A673 (cell line): ENCODE measurements at regions of chr1 and their contacts with region 1.

Region 1: DNA sequence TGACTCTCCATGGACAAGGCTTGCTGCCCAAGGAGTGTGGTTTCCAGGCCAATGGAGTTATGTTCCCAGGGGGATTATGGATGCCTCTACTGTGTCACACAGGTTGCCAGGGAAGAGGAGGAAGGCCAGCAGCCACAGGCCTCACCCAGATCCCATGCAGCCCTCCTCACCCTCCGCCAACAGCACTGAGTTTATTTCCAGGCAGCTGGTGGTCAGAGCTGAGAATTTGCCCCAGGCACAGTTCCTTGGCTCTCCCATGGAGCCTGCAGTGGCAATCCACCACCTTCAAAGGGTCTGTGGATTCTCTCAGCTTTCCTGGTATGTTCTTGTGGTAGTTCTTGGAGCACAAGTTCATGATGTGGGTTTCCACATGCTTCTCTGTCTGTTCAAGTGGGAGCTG is 79.2 kb downstream of the NTNG1 start:
- DNase-seq: no peak
- H3K4me3 ChIP-seq: no peak overlapping the region
- H3K27ac ChIP-seq: no peak overlapping the region
- H3K4me1 ChIP-seq: peaks cover 38% of the 10 kb centered on the region
- H3K27me3 ChIP-seq: no peaks in the 10 kb centered on the region
- CTCF ChIP-seq: no peak

Region 2: DNA sequence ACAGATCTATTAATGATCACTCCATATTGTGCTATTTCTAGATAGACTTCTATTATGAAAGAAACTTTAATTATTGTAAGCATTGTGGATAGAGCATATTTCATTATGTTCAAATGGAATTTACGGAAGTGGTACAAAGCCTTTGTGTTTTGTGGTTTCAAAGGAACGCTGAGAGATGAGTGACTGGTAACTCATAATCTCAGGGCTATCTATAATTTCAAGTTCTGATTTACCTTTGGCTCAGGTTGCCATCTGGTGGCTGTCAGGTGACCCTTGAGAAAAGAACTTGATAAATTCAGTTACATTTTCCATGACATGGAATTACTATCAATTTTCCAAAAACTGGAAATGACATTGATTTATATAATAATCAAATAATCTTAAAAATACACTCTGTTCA is 67.0 kb before region 1 on chr1:
- CTCF ChIA-PET with region 1: no interaction called
- POLR2A ChIA-PET with region 1: interaction called, 16 read pairs
- intact Hi-C with region 1: no loop called
- DNase-seq: no peak
- H3K4me3 ChIP-seq: no peak overlapping the region
- H3K27ac ChIP-seq: no peak overlapping the region
- H3K4me1 ChIP-seq: peaks cover 89% of the 10 kb centered on the region
- H3K27me3 ChIP-seq: no peaks in the 10 kb centered on the region
- CTCF ChIP-seq: 0 out of 2 replicates have a peak, but pooled peaks have one; percentile 15

Region 3: DNA sequence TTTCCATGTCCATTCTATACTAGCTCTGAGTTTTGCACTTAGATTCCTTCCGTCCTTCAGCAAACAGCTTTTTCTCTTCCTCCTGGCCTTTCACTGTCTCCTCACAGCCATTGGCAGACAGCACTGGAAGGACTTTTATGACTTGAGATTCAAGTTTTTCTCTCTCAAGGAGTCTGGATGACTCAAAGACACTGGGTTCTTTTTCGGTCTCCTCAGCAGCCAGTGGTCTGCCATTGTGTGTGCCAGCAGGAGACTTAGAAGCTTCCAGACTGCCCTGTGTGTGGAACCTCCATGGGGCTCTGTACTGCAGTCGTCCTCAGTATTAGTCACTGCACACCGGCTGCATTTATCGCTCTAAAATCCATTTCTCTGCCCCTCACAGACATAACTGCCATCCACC is 48.7 kb before region 1 on chr1:
- CTCF ChIA-PET with region 1: no interaction called
- POLR2A ChIA-PET with region 1: no interaction called
- intact Hi-C with region 1: loop called (anchors 5 kb)
- DNase-seq: peak; percentile 85
- H3K4me3 ChIP-seq: no peak overlapping the region
- H3K27ac ChIP-seq: peak overlapping the region; percentile 76
- H3K4me1 ChIP-seq: peaks cover 97% of the 10 kb centered on the region
- H3K27me3 ChIP-seq: no peaks in the 10 kb centered on the region
- CTCF ChIP-seq: no peak

Region 4: DNA sequence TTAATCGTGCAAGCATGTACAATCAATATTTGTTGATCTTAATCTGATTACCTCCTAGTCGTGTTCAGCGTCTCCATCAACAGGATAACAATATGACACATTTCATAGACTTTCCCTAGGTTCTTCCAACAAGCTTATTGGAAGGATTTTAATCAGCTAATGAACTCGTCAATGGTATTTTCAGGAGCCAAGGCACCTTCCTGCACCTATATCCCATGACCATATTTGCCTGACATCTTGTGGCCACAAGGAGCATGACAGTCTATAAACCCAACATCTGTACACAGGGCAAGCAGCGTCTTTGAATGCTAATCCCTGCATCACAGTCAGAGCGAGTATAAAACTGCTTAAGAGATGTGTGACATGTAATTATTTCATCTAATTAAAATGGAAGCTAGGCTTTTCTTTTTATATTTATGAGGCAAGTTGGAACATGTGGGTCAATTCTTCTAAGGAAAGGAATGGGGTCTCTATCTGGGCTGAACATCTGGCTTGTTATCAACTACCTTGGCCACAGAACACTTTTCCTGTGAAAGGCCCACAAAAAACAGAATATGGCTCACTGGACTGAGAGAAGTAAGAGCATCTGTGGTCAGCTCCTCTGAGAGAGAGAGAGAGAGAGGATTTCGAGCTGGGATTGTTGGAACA is 309.6 kb after region 1 on chr1:
- CTCF ChIA-PET with region 1: no interaction called
- POLR2A ChIA-PET with region 1: no interaction called
- intact Hi-C with region 1: no loop called
- DNase-seq: peak; percentile 87
- H3K4me3 ChIP-seq: no peak overlapping the region
- H3K27ac ChIP-seq: no peak overlapping the region
- H3K4me1 ChIP-seq: peaks cover 17% of the 10 kb centered on the region
- H3K27me3 ChIP-seq: no peaks in the 10 kb centered on the region
- CTCF ChIP-seq: peak; percentile 93